Activated CD8-positive, alpha-beta T cell treated with anti-CD3 and anti-CD28 coated beads for 36 hours (primary cell): ENCODE measurements at regions of chr4 and their contacts with region 1.

Region 1: DNA sequence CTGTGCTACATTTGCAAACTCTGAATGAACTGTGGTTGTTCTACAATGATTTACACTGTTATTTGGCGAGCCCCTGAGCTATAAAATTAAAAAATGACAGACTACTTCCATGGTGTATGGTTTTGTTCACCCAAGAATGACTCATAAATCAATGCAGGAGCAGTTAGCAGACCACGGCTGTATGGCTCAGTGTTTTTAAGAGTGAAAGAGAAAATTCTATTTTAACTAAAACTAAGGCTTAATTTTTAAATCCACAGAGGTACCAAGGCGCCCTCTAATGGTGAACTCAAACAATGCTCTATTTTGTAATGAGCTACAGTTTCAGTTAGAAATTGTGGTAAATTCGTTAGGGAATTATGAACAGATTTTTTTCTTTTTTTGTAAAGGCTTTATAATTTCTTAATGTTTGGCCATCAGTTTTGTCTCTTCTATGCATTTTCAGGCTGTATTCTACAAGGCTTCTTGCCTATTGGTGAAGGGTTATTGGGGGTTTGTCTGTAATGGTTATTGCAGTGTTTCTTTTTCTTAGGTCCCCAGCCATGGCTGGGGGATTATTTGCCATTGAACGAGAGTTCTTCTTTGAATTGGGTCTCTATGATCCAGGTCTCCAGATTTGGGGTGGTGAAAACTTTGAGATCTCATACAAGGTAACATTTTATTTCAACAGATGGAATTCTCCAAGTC is 32.5 kb downstream of the HMGB2 start:
- DNase-seq: peak; percentile 28
- ATAC-seq: peak; percentile 67
- H3K4me3 Mint-ChIP-seq: no peak overlapping the region
- H3K27ac Mint-ChIP-seq: no peak overlapping the region
- H3K4me1 Mint-ChIP-seq: peaks cover 3% of the 10 kb centered on the region
- H3K27me3 Mint-ChIP-seq: no peaks in the 10 kb centered on the region
- CTCF ChIP-seq: peak; percentile 84

Region 2: DNA sequence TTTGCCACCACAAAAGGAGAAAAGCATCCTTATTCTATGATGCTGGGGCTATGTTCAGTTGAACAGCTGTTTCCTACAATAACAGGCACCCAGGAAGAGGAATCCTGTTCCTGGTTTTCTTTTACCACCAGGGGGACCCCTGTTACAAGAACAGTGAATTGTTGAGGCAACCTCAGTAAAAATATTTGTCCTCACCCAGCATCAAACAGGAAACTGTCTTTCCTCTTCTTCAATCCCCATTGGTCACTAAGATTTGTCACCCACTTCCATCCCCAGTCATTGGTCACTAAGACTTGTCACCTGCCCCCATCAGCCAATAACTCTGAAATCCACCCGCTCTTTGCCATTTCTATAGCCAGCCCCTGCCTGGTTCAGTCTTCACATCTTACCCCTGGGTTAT is 276.5 kb before region 1 on chr4:
- CTCF ChIA-PET with region 1: interaction called, 26 read pairs
- POLR2A ChIA-PET with region 1: no interaction called
- intact Hi-C with region 1: no loop called
- DNase-seq: peak; percentile 40
- ATAC-seq: peak; percentile 80
- H3K4me3 Mint-ChIP-seq: no peak overlapping the region
- H3K27ac Mint-ChIP-seq: no peak overlapping the region
- H3K4me1 Mint-ChIP-seq: no peaks in the 10 kb centered on the region
- H3K27me3 Mint-ChIP-seq: no peaks in the 10 kb centered on the region
- CTCF ChIP-seq: peak; percentile 59

Region 3: DNA sequence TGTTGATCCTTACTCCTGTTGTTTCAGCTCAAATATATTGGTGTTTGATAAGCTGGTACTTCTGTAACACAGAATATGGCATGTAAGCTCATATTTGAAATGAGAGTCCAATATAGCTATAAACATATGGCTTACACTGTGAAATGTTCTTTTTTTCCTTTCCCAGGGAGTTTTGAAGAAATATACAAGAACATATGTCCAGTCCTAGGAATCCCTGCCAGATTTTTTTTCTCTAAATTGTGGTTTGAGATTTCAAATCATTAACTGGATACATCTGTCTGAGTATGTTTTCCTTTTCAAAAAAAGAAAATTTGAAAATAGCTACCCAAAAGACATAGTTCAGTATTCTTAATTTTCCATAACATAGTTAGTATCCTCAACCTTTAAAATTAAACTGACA is 27.7 kb before region 1 on chr4:
- CTCF ChIA-PET with region 1: interaction called, 20 read pairs
- POLR2A ChIA-PET with region 1: interaction called, 4 read pairs
- intact Hi-C with region 1: no loop called
- DNase-seq: no peak
- ATAC-seq: no peak
- H3K4me3 Mint-ChIP-seq: no peak overlapping the region
- H3K27ac Mint-ChIP-seq: no peak overlapping the region
- H3K4me1 Mint-ChIP-seq: no peaks in the 10 kb centered on the region
- H3K27me3 Mint-ChIP-seq: no peaks in the 10 kb centered on the region
- CTCF ChIP-seq: no peak

Region 4: GRCh38 chr4:173288296-173288695 is 13.4 kb before region 1 on chr4:
- CTCF ChIA-PET with region 1: interaction called, 38 read pairs
- POLR2A ChIA-PET with region 1: interaction called, 3 read pairs
- intact Hi-C with region 1: no loop called
- DNase-seq: peak; percentile 87
- ATAC-seq: peak; percentile 49
- H3K4me3 Mint-ChIP-seq: no peak overlapping the region
- H3K27ac Mint-ChIP-seq: no peak overlapping the region
- H3K4me1 Mint-ChIP-seq: peaks cover 15% of the 10 kb centered on the region
- H3K27me3 Mint-ChIP-seq: no peaks in the 10 kb centered on the region
- CTCF ChIP-seq: peak; percentile 63

Region 5: DNA sequence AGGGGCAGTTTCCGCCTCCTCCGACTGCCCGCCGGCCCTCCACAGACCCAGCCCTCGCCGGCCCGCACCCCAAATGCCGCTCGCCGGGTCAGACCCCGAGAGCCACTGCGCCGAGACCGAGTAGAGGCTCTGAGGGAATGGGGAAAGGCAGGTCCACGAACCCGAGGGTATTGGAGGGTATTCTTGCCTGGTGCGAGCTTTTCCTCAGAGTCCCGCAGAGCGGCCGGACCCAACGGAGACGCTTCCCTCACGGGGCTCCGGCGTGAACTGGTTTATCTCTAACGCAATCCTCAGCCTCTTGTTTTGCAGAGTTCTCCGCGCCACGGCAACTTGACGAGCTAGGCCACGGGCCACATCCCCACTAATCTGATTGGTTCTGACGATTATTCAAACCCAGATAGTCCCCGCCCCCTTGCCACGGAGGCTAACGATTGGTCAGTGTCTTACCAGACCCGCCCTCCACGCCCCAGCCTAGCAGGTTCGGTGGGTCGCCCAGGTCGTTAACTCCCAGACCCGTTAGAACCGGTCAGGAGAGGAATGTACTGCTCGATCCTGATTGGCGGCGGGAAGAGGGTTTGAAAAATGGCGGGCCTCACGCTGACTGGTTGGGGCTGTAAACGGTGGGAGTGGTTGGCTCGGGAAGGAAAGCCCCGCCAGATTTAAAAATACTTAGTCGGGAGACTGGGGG is 32.6 kb after region 1 on chr4 and contains the start of gene HMGB2:
- CTCF ChIA-PET with region 1: interaction called, 15 read pairs
- POLR2A ChIA-PET with region 1: interaction called, 8 read pairs
- intact Hi-C with region 1: no loop called
- DNase-seq: peak; percentile 100
- ATAC-seq: peak; percentile 94
- H3K4me3 Mint-ChIP-seq: peak within 1 kb of the TSS; percentile 92
- H3K27ac Mint-ChIP-seq: peak within 1 kb of the TSS; percentile 99
- H3K4me1 Mint-ChIP-seq: peaks cover 13% of the 10 kb centered on the region
- H3K27me3 Mint-ChIP-seq: peaks cover 6% of the 10 kb centered on the region
- CTCF ChIP-seq: no peak
- total RNA-seq, gene HMGB2: 527 to 534 TPM

Region 6: GRCh38 chr4:173413036-173413435 is 111.4 kb after region 1 on chr4:
- CTCF ChIA-PET with region 1: interaction called, 15 read pairs
- POLR2A ChIA-PET with region 1: no interaction called
- intact Hi-C with region 1: no loop called
- DNase-seq: no peak
- ATAC-seq: no peak
- H3K4me3 Mint-ChIP-seq: no peak overlapping the region
- H3K27ac Mint-ChIP-seq: no peak overlapping the region
- H3K4me1 Mint-ChIP-seq: no peaks in the 10 kb centered on the region
- H3K27me3 Mint-ChIP-seq: no peaks in the 10 kb centered on the region
- CTCF ChIP-seq: no peak